ENCODE measurements at regions of chr13 and their contacts with region 1.

Region 1: GRCh38 chr13:42969558-42970172 is 22.4 kb downstream of the EPSTI1 start:
- DNase-seq: peak; percentile 93
- H3K4me3 Mint-ChIP-seq: no peak overlapping the region
- H3K27ac Mint-ChIP-seq: no peak overlapping the region
- H3K4me1 Mint-ChIP-seq: peaks cover 30% of the 10 kb centered on the region
- H3K27me3 Mint-ChIP-seq: no peaks in the 10 kb centered on the region

Region 2: GRCh38 chr13:42671502-42671901 is 298.2 kb before region 1 on chr13:
- intact Hi-C with region 1: no loop called
- DNase-seq: no peak
- H3K4me3 Mint-ChIP-seq: no peak overlapping the region
- H3K27ac Mint-ChIP-seq: no peak overlapping the region
- H3K4me1 Mint-ChIP-seq: no peaks in the 10 kb centered on the region
- H3K27me3 Mint-ChIP-seq: peaks cover 8% of the 10 kb centered on the region

Region 3: DNA sequence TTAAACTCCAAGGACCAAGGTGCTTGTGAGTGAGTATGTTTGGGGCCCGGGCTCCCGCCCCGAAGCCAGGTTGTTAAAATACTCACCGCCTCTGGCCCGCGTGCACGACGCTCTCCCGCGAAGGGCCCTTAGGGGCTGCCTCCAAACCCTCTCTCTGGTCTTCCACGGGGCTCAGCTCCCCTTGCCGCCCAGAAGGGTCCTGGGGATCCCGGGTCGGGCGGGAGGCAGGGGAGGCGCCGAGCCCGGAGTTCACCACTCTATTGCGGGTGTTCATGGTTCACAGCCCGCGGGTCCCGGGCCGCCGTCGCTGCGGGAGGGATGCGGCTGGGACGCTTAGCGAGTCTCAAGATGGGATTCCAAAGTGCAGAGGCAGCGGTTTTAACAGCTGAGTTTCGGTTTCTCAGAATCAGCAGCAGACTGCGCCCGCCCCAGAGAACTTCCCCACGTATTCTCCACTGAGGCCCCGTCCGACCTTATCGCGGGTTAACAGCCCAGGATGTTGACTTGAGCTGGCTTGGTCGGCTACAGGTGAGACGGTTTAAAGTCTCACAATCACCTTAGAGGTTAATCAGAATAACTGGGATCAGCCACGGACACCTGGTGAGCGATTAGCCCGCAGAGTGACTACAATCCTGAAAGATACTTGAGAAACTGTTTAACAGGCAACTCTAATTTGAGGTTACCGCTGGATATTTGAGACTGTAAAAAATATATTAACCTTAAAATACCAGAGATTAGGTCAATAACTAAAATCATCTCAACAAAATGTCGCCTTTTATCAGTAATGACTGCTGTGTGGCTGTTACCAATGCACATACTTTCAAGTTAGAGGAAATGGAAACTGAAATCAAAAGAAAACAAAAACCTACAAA is 22.5 kb after region 1 on chr13 and contains the start of gene EPSTI1:
- intact Hi-C with region 1: loop called (anchors 1 kb)
- DNase-seq: peak; percentile 95
- H3K4me3 Mint-ChIP-seq: peak within 1 kb of the TSS; percentile 99
- H3K27ac Mint-ChIP-seq: peak within 1 kb of the TSS; percentile 99
- H3K4me1 Mint-ChIP-seq: peaks cover 61% of the 10 kb centered on the region
- H3K27me3 Mint-ChIP-seq: no peaks in the 10 kb centered on the region
- total RNA-seq, gene EPSTI1: 16.2 and 16.5 TPM in 2 replicates

Region 4: DNA sequence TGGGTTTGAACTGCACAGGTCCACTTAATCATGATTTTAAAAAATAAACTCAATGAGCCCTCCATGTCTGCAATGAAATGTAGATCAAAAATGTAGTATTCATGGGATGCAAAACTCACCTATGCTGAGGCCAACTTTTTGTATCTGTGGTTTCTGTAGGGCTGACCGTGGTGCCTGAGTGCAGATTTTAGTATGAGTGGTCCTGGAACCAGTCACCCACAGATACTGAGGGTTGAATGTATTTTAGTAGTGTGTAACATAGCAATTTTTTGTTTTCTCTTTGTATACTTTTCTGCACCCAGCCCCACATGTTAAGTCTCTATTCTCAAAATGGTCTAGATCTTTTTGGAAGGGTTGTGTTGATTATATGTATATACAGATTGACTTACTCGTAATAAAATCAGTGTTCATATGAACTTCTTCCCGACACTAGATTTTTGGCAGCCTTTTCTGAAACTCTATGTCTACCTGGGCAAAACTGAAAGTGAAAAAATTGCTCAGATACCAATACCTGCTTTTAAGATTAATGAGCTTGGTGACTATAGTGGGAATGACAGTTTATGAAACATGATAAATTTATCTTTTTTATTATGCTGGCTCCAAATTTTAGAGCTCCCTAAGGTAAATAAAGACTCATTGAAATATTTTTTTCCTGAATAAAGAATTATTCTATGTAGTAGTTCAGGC is 105.3 kb after region 1 on chr13:
- intact Hi-C with region 1: loop called (anchors 5 kb)
- DNase-seq: peak; percentile 52
- H3K4me3 Mint-ChIP-seq: peak overlapping the region; percentile 25
- H3K27ac Mint-ChIP-seq: no peak overlapping the region
- H3K4me1 Mint-ChIP-seq: peaks cover 34% of the 10 kb centered on the region
- H3K27me3 Mint-ChIP-seq: no peaks in the 10 kb centered on the region

Region 5: GRCh38 chr13:43180837-43181236 is 211.2 kb after region 1 on chr13:
- intact Hi-C with region 1: no loop called
- DNase-seq: no peak
- H3K4me3 Mint-ChIP-seq: no peak overlapping the region
- H3K27ac Mint-ChIP-seq: no peak overlapping the region
- H3K4me1 Mint-ChIP-seq: no peaks in the 10 kb centered on the region
- H3K27me3 Mint-ChIP-seq: peaks cover 24% of the 10 kb centered on the region

Region 6: GRCh38 chr13:43804461-43805070 is 834.9 kb after region 1 on chr13:
- intact Hi-C with region 1: loop called (anchors 1 kb)
- DNase-seq: peak; percentile 75
- H3K4me3 Mint-ChIP-seq: no peak overlapping the region
- H3K27ac Mint-ChIP-seq: no peak overlapping the region
- H3K4me1 Mint-ChIP-seq: peaks cover 6% of the 10 kb centered on the region
- H3K27me3 Mint-ChIP-seq: peaks cover 14% of the 10 kb centered on the region